ENCODE measurements at regions of chr3 and their contacts with region 1.

Region 1: DNA sequence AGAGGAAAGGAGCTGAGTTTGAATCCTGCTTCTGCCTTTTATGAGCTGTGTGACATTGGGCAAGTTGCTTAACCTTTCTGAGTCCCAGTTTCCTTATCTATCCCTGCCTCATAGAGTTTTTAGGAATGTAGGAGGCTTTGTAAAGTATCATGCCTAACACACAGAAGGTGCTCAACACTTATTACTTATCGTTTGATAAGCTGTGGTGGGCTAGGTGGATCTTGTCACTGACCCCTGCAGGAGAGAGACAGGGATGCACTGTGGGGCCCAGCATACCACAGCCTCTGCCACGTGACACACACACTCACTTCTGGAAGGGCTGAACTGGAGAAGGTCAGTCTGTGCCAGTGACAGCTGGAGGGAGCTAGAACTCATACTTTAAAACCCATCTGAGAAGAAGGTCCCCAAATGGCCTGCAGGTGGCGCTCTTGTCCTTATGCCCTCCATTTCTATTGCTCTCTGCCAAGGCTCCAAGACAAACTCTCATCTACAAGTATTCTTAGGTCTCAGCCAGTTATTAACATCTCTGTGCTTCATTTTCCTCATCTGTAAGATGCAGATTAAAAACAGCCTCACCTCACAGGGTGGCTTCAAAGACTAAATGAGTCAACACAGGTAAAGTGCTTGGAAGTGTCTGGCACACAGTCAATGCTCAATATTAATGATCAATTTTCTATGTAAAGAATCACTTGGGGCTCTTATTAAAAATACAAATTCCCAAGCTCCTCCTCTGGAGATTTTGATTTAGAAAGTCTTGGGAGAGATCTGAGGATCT is 57.5 kb upstream of the HACD2 start:
- DNase-seq: peak; percentile 86
- H3K4me3 ChIP-seq: no peak overlapping the region
- H3K27ac ChIP-seq: no peak overlapping the region
- H3K27me3 ChIP-seq: no peaks in the 10 kb centered on the region
- CTCF ChIP-seq: peak; percentile 89

Region 2: DNA sequence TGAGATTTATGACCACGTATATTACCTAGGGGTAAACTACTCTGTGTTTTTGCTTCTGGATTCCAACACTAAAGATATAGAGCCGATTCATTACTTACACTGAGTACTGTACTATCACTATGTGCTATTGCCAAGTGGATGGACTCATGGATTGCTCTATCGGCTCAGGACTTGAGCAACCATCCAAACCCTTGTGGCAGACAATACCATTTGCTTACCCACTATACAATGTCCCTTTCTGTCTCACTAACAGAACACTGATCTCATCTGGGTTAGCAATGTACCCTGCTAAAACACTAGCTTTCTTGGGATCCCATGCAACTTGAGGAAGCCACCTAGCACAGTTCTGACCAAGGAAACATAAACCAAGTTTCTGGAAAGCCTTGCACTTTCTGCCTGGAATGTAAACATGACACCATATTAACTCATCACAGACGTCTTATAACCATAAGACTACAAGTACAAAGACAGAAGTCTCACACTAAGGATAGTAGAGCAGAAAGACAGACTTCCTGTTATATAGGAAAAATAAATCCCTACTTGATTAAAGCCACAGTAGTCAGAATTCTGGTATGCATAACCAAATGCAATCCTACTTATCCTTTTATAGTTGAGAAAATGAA is 96.1 kb before region 1 on chr3:
- CTCF ChIA-PET with region 1: interaction called, 10 read pairs
- POLR2A ChIA-PET with region 1: no interaction called
- DNase-seq: peak; percentile 65
- H3K4me3 ChIP-seq: no peak overlapping the region
- H3K27ac ChIP-seq: no peak overlapping the region
- H3K27me3 ChIP-seq: no peaks in the 10 kb centered on the region
- CTCF ChIP-seq: no peak

Region 3: GRCh38 chr3:123632161-123632655 is 10.2 kb before region 1 on chr3:
- CTCF ChIA-PET with region 1: interaction called, 25 read pairs
- POLR2A ChIA-PET with region 1: no interaction called
- DNase-seq: peak; percentile 84
- H3K4me3 ChIP-seq: no peak overlapping the region
- H3K27ac ChIP-seq: peak overlapping the region; percentile 39
- H3K27me3 ChIP-seq: no peaks in the 10 kb centered on the region
- CTCF ChIP-seq: no peak

Region 4: DNA sequence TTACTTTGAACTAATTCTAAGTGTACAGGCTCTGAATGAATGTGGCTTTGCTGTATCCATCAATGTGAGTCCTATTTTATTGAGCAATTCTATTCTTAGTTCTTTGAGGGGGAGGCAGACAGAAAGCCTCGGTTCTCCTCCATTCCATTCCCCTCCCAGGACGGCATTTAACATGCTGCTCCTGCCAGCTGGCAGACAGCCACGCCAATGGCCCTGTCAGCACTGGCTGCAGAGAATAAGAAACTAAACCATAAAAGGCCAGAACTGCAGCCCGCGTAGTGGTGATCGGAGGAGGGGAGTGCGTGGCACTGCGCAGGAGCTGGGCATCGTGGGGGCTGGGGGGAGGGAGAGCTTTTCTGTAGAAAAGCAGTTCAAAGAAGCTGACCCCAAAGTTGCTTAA is 18.5 kb after region 1 on chr3:
- CTCF ChIA-PET with region 1: interaction called, 112 read pairs
- POLR2A ChIA-PET with region 1: no interaction called
- DNase-seq: peak; percentile 94
- H3K4me3 ChIP-seq: no peak overlapping the region
- H3K27ac ChIP-seq: peak overlapping the region; percentile 83
- H3K27me3 ChIP-seq: no peaks in the 10 kb centered on the region
- CTCF ChIP-seq: no peak

Region 5: GRCh38 chr3:123694366-123695145 is 52.2 kb after region 1 on chr3:
- CTCF ChIA-PET with region 1: interaction called, 10 read pairs
- POLR2A ChIA-PET with region 1: no interaction called
- DNase-seq: no peak
- H3K4me3 ChIP-seq: 0 out of 2 replicates have a peak overlapping the region, but pooled peaks have one; percentile 7
- H3K27ac ChIP-seq: peak overlapping the region; percentile 34
- H3K27me3 ChIP-seq: no peaks in the 10 kb centered on the region
- CTCF ChIP-seq: no peak

Region 6: GRCh38 chr3:123716411-123716810 is 74.0 kb after region 1 on chr3:
- CTCF ChIA-PET with region 1: interaction called, 17 read pairs
- POLR2A ChIA-PET with region 1: interaction called, 3 read pairs
- DNase-seq: no peak
- H3K4me3 ChIP-seq: no peak overlapping the region
- H3K27ac ChIP-seq: no peak overlapping the region
- H3K27me3 ChIP-seq: no peaks in the 10 kb centered on the region
- CTCF ChIP-seq: no peak

Measured in AG04450 (cell line).